HEK293 (cell line): ENCODE measurements at regions of chr5 and their contacts with region 1.

Region 1: GRCh38 chr5:54517174-54518092 is at the start of gene SNX18:
- H3K4me3 ChIP-seq: peak within 1 kb of the TSS; percentile 83
- H3K27ac ChIP-seq: peak within 1 kb of the TSS; percentile 86
- H3K4me1 ChIP-seq: peaks cover 7% of the 10 kb centered on the region; the same call in 1 of the 2 replicates
- CTCF ChIP-seq: peak; percentile 90

Region 2: GRCh38 chr5:54401515-54401914 is 115.9 kb before region 1 on chr5:
- CTCF ChIA-PET with region 1: no interaction called
- POLR2A ChIA-PET with region 1: no interaction called
- H3K4me3 ChIP-seq: no peak overlapping the region
- H3K27ac ChIP-seq: no peak overlapping the region
- H3K4me1 ChIP-seq: no peaks in the 10 kb centered on the region; the same call in 1 of the 2 replicates
- CTCF ChIP-seq: no peak

Region 3: DNA sequence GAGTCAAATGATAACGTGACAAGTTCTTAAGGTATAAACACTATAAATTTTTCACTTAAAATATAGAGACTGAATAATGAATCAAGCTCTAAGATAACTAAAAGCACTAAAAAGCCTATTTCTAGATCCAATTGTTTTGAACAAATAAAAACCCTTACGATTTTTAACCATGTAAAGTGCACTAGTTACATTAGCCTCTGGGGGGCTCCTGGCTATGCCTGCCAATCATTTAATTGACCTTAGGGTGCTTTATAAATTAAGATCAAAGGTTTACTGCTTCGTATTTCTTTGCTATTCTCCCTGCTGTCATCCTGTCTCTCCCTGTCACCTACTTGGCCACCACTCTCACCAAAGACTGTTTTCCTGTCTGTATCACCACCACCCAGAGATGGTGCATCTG is 334.6 kb after region 1 on chr5:
- CTCF ChIA-PET with region 1: interaction called, 25 read pairs
- POLR2A ChIA-PET with region 1: no interaction called
- H3K4me3 ChIP-seq: no peak overlapping the region
- H3K27ac ChIP-seq: no peak overlapping the region
- H3K4me1 ChIP-seq: 0 out of 2 replicates have a peak, but pooled peaks cover 2% of the 10 kb centered on the region
- CTCF ChIP-seq: no peak